Heart right ventricle (tissue), 16 donors: ENCODE measurements at regions of chr18 and their contacts with region 1.

Region 1: GRCh38 chr18:48735080-48735676 is 196.3 kb downstream of the CTIF start:
- DNase-seq: no peak
- ATAC-seq: peak in 1 of 8 donors; percentile 2
- H3K4me3 ChIP-seq: no peak overlapping the region
- H3K27ac ChIP-seq: no peak overlapping the region
- H3K4me1 ChIP-seq: peaks cover 25 to 60% (median 41%) of the 10 kb centered on the region in 9 donors
- H3K27me3 ChIP-seq: no peaks in the 10 kb centered on the region
- CTCF ChIP-seq: no peak

Region 2: DNA sequence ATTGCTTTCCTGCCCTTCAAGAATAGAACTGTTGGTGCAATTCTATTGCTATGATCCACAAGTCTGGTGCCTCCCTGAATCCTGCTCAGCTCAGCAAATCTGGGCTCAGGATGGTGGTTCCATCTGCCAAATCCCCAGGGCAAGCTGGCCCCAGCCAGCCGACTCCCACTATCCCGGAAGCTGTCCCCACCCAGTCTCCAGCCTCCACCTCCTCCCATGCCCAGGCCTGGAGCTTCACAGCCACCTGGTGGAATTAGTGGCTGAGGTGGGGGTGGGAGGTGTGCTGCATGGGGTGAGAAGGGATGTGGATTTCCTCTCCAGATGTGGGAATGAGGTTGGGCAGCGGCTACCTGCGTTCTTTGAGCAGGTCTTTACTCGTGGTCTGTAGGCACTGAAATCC is 685.4 kb before region 1 on chr18:
- intact Hi-C with region 1: loop called in 1 of 10 experiments (anchors 10 kb)
- DNase-seq: no peak
- ATAC-seq: no peak
- H3K4me3 ChIP-seq: no peak overlapping the region
- H3K27ac ChIP-seq: no peak overlapping the region
- H3K4me1 ChIP-seq: peaks cover 0 to 6% (median 0%) of the 10 kb centered on the region in 9 donors
- H3K27me3 ChIP-seq: peaks cover 0 to 12% (median 0%) of the 10 kb centered on the region in 7 donors
- CTCF ChIP-seq: no peak

Region 3: DNA sequence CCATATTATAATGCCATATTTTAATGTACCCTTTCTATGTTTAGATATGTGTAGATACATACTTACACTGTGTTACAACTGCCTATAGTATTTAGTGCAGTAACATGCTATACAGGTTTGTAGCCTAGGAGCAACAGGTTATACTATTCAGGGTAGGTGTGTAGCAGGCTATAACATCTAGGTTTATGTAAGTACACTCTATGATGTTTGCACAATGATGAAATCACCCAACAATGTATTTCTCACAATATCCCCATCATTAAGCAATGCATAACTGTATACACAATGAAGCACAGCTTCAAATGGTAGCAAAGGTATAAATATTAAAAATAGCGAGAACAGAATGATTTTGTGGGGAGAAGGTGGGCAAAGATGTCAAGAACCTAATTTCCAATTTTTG is 607.5 kb after region 1 on chr18:
- intact Hi-C with region 1: no loop called
- DNase-seq: no peak
- ATAC-seq: no peak
- H3K4me3 ChIP-seq: no peak overlapping the region
- H3K27ac ChIP-seq: no peak overlapping the region
- H3K4me1 ChIP-seq: peaks cover 0 to 11% (median 0%) of the 10 kb centered on the region in 9 donors
- H3K27me3 ChIP-seq: no peaks in the 10 kb centered on the region
- CTCF ChIP-seq: no peak